HepG2 (cell line): ENCODE measurements at regions of chr4 and their contacts with region 1.

Region 1: GRCh38 chr4:162839819-162840218 is 326.9 kb downstream of the NAF1 start:
- DNase-seq: peak; percentile 3
- ATAC-seq: peak; percentile 76
- H3K4me3 ChIP-seq: no peak overlapping the region
- H3K27ac ChIP-seq: no peak overlapping the region
- H3K4me1 ChIP-seq: no peaks in the 10 kb centered on the region
- H3K27me3 ChIP-seq: no peaks in the 10 kb centered on the region
- CTCF ChIP-seq: no peak
- EP300 ChIP-seq: no peak
- POLR2A ChIP-seq: no peak
- RAD21 ChIP-seq: no peak

Region 2: DNA sequence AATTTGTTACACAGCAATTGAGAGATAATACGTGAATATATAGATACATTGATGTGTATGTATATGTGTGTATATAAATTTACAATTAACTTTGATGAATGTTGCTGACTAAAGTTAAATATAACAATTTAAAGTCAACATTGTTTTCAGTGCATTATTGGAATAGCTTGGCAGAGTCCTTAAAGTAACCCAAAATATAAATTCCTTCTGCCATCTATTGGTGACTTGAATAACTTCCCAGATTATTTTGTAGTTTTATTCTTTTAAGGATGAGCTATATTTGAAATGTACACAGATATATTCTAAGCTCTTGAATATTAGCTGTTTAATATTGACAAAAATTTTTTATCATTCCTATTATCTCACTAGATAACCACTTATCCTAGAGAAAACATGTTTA is 377.9 kb before region 1 on chr4:
- CTCF ChIA-PET with region 1: no interaction called
- POLR2A ChIA-PET with region 1: no interaction called
- in situ Hi-C with region 1: no loop called
- intact Hi-C with region 1: no loop called
- DNase-seq: no peak
- ATAC-seq: no peak
- H3K4me3 ChIP-seq: no peak overlapping the region
- H3K27ac ChIP-seq: no peak overlapping the region
- H3K4me1 ChIP-seq: no peaks in the 10 kb centered on the region
- H3K27me3 ChIP-seq: no peaks in the 10 kb centered on the region
- CTCF ChIP-seq: no peak
- EP300 ChIP-seq: no peak
- POLR2A ChIP-seq: no peak
- RAD21 ChIP-seq: no peak

Region 3: GRCh38 chr4:162565730-162566129 is 274.1 kb before region 1 on chr4:
- CTCF ChIA-PET with region 1: no interaction called
- POLR2A ChIA-PET with region 1: no interaction called
- in situ Hi-C with region 1: no loop called
- intact Hi-C with region 1: loop called (anchors 5 kb)
- DNase-seq: no peak
- ATAC-seq: no peak
- H3K4me3 ChIP-seq: no peak overlapping the region
- H3K27ac ChIP-seq: no peak overlapping the region
- H3K4me1 ChIP-seq: no peaks in the 10 kb centered on the region
- H3K27me3 ChIP-seq: no peaks in the 10 kb centered on the region
- CTCF ChIP-seq: no peak
- EP300 ChIP-seq: no peak
- POLR2A ChIP-seq: no peak
- RAD21 ChIP-seq: no peak